Naive thymus-derived CD8-positive, alpha-beta T cell (primary cell): ENCODE measurements at regions of chr14 and their contacts with region 1.

Region 1: GRCh38 chr14:31207755-31208545 is at the start of gene HECTD1:
- DNase-seq: peak; percentile 85 to 94 (median 90)
- ATAC-seq: peak; percentile 70 to 72
- H3K4me3 Mint-ChIP-seq: peak within 1 kb of the TSS; percentile 90 to 98 (median 96)
- H3K27ac Mint-ChIP-seq: peak within 1 kb of the TSS; percentile 98 to 100 (median 100)
- H3K4me1 Mint-ChIP-seq: peaks cover 20 to 56% (median 50%) of the 10 kb centered on the region in 4 donors
- H3K27me3 Mint-ChIP-seq: no peaks in the 10 kb centered on the region
- polyA plus RNA-seq, gene HECTD1: 20.1 to 30.8 (median 25.9) TPM

Region 2: DNA sequence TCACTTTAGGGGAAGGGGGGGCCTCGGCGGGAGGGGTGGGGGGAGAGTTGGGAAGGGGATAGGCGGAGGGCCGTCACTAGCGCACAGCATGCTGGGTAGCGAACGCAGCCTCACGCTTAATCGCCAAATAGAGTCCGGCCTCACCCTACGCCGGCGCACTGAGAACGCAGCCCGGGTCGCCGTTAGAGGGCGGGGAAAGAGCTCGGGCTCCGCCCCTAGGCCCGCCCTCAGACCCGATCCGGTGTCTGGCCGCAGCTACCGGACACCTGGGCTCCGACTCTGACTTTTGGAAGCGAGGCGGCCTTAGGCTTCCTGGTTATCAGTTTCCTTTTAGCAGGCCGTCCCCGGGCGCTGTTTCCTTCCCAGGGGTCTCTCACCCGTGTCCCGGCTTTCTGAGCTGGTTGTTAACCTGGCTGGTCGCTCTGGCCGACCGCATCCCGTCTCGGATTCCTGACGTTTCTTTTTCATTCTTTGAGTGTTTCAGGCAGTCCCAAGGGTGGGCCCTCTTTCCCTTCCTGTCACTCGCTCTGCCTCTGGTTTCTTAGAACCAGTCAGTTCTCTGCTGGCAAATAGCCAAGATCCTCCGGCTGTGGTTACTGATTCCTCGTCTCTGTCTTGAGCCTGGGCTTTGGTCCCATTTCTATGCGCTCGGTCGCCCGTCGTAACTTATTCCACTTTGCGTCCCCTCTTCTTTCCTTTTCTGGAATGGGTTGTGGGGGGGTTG is 181.4 kb before region 1 on chr14:
- POLR2A ChIA-PET with region 1: interaction called, 59 read pairs
- DNase-seq: peak; percentile 78 to 92 (median 82)
- ATAC-seq: peak; percentile 85 to 86
- H3K4me3 Mint-ChIP-seq: peak overlapping the region; percentile 89 to 99 (median 96)
- H3K27ac Mint-ChIP-seq: peak overlapping the region; percentile 91 to 98 (median 94)
- H3K4me1 Mint-ChIP-seq: peaks cover 36 to 62% (median 58%) of the 10 kb centered on the region in 4 donors
- H3K27me3 Mint-ChIP-seq: no peaks in the 10 kb centered on the region

Region 3: DNA sequence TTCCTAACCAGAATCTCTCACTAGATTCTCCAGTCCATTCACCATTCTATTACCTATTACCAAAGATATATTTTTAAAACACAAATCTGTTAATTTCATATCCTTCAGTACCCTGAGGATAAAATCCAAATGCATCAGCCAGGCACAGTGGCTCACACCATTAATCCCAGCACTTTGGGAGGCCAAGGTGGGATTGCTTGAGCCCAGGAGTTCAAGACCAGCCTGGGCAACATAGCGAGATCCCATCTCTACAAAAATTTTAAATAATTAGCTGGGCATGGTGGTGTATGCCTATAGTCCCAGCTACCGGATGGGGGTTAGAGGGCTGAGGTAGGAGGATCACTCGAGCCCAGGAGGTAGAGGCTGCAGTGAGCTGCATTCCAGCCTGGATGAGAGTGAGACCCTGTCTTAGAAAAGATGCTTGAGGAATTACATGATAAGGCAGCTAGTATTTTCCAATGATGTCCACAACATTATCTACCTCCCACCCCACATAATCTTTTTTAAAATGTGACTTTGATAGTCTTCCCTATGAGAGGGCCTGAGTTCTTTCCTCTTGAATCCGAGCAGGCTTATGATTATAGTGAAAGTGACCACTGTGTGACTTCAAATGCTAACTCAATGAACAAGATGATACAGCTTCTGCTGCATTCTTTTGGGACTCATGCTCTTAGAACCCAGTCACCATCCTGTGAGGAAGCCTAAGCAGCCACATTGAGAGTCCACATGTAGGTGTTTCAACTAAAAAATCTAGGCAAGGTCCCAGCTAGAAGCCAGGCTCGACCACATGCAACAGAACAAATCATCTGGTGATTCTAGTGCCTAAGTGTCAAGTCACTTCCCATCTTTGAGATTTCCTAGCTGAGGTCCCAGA is 18.4 kb before region 1 on chr14:
- POLR2A ChIA-PET with region 1: interaction called, 10 read pairs
- DNase-seq: no peak
- ATAC-seq: no peak
- H3K4me3 Mint-ChIP-seq: no peak overlapping the region
- H3K27ac Mint-ChIP-seq: peak overlapping the region in 5 of 10 donors; percentile 17 to 91 (median 59)
- H3K4me1 Mint-ChIP-seq: peaks cover 22 to 46% (median 37%) of the 10 kb centered on the region in 4 donors
- H3K27me3 Mint-ChIP-seq: no peaks in the 10 kb centered on the region

Region 4: DNA sequence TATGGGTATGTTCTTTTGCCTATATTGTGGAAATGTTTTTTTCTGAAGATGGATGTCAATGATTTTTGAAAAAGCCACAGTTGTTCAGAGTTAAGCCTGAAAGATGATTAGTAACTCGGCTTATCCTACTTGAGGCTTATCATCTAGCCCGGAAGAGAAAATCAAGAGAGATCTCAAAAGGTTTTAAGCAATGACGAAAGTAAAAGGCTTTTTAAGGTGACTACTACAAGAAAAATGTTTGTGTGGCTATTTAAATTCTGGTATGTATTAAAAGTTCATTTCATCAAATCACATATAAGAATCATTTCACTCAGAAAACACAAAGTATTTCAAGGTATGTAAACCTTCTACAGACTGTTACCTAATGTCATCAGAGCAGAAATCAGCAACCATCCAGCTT is 172.2 kb after region 1 on chr14:
- POLR2A ChIA-PET with region 1: no interaction called
- DNase-seq: no peak
- ATAC-seq: no peak
- H3K4me3 Mint-ChIP-seq: no peak overlapping the region
- H3K27ac Mint-ChIP-seq: no peak overlapping the region
- H3K4me1 Mint-ChIP-seq: peaks cover 0 to 6% (median 3%) of the 10 kb centered on the region in 4 donors
- H3K27me3 Mint-ChIP-seq: no peaks in the 10 kb centered on the region

Region 5: DNA sequence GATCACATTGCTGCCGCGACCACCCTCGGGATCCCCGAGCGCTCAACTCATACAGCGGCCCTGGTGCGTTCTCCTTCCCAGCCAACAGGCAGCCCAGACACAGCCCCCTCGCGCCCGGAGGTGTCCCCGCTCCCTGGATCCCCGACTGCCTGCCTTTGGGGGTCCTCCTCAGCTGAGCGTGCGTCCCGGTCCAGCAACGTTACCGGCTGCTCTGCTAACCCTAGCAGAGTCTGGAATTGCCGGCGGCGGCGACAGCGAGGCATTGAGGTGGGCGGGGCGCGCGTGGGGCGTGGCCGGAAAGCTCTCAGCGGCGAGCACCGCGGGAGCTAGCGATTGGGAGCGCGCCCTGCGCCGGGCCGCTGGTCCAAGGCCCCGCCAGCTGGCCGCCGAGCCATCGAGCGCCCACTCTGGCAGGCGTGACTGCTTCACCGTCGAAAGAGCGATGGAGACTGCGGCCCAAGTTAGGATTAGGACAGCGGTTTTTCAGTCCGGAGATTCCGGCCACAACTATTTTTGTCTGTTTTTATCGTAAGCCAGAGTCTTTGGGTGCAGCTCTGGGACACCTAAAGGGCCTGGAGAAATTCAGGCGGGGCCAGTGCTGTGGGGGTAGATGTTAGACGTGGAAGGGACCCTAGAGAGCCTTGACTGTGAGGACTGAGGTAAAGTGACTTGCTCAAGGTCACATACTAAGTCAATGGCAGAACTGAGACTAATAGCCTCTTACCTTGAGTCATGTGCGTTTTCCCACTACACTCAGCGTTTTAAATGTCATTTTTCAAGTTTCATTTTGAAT is 212.6 kb after region 1 on chr14 and contains the start of gene HEATR5A:
- POLR2A ChIA-PET with region 1: interaction called, 22 read pairs
- DNase-seq: peak; percentile 82 to 94 (median 90)
- ATAC-seq: peak; percentile 95 to 96
- H3K4me3 Mint-ChIP-seq: peak within 1 kb of the TSS; percentile 92 to 100 (median 98)
- H3K27ac Mint-ChIP-seq: peak within 1 kb of the TSS; percentile 72 to 98 (median 93)
- H3K4me1 Mint-ChIP-seq: peaks cover 8 to 28% (median 19%) of the 10 kb centered on the region in 4 donors
- H3K27me3 Mint-ChIP-seq: no peaks in the 10 kb centered on the region
- polyA plus RNA-seq, gene HEATR5A: 4.0 to 5.9 (median 5.5) TPM

Region 6: DNA sequence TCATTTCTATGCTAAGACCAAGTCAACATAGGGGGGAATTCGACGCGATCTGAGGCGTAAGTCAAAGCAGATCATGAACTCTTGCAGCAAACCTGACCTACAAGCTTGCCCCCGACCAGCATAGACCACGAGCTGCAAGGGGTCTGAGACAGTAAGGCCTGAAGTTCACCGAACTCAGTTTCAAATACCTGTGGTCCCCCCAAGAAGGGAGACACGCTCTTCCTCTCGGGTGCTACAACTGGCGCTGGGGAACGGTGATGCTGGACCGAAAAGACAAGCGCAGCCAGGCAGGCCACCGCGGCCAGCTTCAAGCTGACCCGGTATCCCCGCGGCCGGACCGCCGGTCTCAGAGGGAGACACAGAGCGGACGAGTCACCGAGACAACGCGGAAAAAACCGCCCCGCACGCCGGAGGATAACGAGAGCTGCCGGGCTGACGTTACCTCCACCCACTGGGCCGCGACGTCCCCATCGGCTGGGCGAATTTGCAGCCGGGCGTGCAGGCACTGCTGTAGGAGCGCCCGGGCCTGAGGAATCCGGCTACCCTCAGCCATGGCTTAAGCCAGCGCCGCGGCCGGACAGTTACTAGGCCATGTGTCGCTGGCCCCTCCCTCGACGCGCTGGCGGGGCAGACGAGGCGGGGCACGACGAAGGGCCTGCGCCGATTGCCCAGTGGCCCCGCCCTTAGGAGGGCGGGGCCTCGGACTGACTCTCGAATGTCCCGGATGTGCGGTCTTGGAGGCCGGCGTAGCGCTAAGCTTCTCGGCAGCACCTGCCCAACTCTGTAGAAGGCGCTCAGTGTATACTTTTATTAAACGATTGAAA is 249.1 kb after region 1 on chr14 and contains the start of gene DTD2:
- POLR2A ChIA-PET with region 1: interaction called, 15 read pairs
- DNase-seq: peak; percentile 84 to 94 (median 88)
- ATAC-seq: peak; percentile 95 to 97
- H3K4me3 Mint-ChIP-seq: peak within 1 kb of the TSS; percentile 86 to 98 (median 96)
- H3K27ac Mint-ChIP-seq: peak within 1 kb of the TSS; percentile 92 to 98 (median 96)
- H3K4me1 Mint-ChIP-seq: peaks cover 11 to 43% (median 37%) of the 10 kb centered on the region in 4 donors
- H3K27me3 Mint-ChIP-seq: peaks cover 0 to 5% (median 0%) of the 10 kb centered on the region in 5 donors
- polyA plus RNA-seq, gene DTD2: 19.6 to 26.9 (median 23.1) TPM

Region 7: DNA sequence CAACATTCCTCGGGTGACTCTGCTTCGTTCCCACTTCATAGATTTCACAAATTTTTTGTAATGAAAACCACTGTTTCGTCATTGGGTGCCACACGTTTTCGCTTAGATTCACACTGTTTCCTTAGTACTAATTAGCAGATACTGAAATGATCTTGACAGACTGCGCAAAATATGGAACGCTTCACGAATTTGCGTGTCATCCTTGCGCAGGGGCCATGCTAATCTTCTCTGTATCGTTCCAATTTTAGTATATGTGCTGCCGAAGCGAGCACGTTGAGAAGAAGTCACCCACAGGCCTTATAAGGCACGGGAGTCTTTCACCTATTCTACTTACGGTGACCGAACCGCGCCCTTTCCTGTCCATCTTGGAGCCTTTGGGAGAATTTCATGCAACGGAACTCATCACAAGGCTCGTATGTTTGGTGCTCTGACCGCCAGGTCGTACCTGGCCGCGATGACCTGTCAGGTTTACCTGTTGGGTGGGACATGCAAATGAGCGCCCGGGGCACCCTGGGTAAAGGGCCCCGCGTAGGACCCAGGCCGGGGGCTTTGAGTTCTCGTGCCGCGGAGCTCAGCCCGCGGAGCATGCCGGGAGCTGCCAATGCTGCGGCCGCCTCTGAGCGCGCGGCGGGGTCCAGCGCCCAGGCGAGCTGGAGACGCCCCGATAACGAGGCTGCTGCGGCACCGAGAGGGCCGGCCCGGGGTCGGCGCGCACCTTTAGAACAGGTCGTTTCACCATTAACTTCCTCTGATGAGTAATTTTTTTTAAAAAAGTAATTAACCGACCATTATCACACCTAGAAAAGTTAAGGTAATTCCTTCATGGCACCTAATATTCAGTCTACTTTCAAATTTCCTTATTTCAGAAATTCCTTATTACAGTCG is 995.3 kb after region 1 on chr14 and contains the start of gene RNU6-8:
- POLR2A ChIA-PET with region 1: interaction called, 13 read pairs
- DNase-seq: peak; percentile 84 to 99 (median 90)
- ATAC-seq: peak; percentile 78 to 80
- H3K4me3 Mint-ChIP-seq: peak within 1 kb of the TSS; percentile 88 to 96 (median 95)
- H3K27ac Mint-ChIP-seq: peak within 1 kb of the TSS; percentile 99 to 100 (median 100)
- H3K4me1 Mint-ChIP-seq: peaks cover 16 to 50% (median 28%) of the 10 kb centered on the region in 4 donors
- H3K27me3 Mint-ChIP-seq: peaks cover 0 to 5% (median 0%) of the 10 kb centered on the region in 5 donors
- polyA plus RNA-seq, gene RNU6-8: not detected